Activated CD4-positive, alpha-beta T cell treated with anti-CD3 and anti-CD28 coated beads for 36 hours (primary cell): ENCODE measurements at regions of chr11 and their contacts with region 1.

Region 1: GRCh38 chr11:63938479-63939396 is at the start of gene NAA40:
- DNase-seq: peak; percentile 97
- ATAC-seq: peak; percentile 93
- H3K4me3 Mint-ChIP-seq: peak within 1 kb of the TSS; percentile 83
- H3K27ac Mint-ChIP-seq: peak within 1 kb of the TSS; percentile 87
- H3K4me1 Mint-ChIP-seq: peaks cover 16% of the 10 kb centered on the region
- H3K27me3 Mint-ChIP-seq: no peaks in the 10 kb centered on the region
- total RNA-seq, gene NAA40: 13.7 to 15.9 TPM

Region 2: GRCh38 chr11:63681321-63682049 is 257.3 kb before region 1 on chr11 and contains the start of gene RTN3:
- CTCF ChIA-PET with region 1: no interaction called
- POLR2A ChIA-PET with region 1: no interaction called
- intact Hi-C with region 1: loop called in 1 of 2 experiments (anchors 2 kb)
- DNase-seq: peak; percentile 99
- ATAC-seq: peak; percentile 94
- H3K4me3 Mint-ChIP-seq: peak within 1 kb of the TSS; percentile 90
- H3K27ac Mint-ChIP-seq: peak within 1 kb of the TSS; percentile 89
- H3K4me1 Mint-ChIP-seq: peaks cover 20% of the 10 kb centered on the region
- H3K27me3 Mint-ChIP-seq: no peaks in the 10 kb centered on the region
- total RNA-seq, gene RTN3: 42.2 to 43.0 TPM

Region 3: GRCh38 chr11:63866211-63866610 is 72.5 kb before region 1 on chr11:
- CTCF ChIA-PET with region 1: no interaction called
- POLR2A ChIA-PET with region 1: no interaction called
- intact Hi-C with region 1: loop called in 1 of 2 experiments (anchors 1 kb)
- DNase-seq: peak; percentile 92
- ATAC-seq: peak; percentile 81
- H3K4me3 Mint-ChIP-seq: peak overlapping the region; percentile 28
- H3K27ac Mint-ChIP-seq: peak overlapping the region; percentile 62
- H3K4me1 Mint-ChIP-seq: peaks cover 79% of the 10 kb centered on the region
- H3K27me3 Mint-ChIP-seq: no peaks in the 10 kb centered on the region

Region 4: GRCh38 chr11:63916837-63917691 is 21.7 kb before region 1 on chr11 and contains the start of gene RCOR2:
- CTCF ChIA-PET with region 1: interaction called, 4 read pairs
- POLR2A ChIA-PET with region 1: no interaction called
- intact Hi-C with region 1: loop called in 1 of 2 experiments (anchors 1 kb)
- DNase-seq: peak; percentile 81
- ATAC-seq: peak; percentile 68
- H3K4me3 Mint-ChIP-seq: peak within 1 kb of the TSS; percentile 70
- H3K27ac Mint-ChIP-seq: no peak within 1 kb of the TSS
- H3K4me1 Mint-ChIP-seq: peaks cover 12% of the 10 kb centered on the region
- H3K27me3 Mint-ChIP-seq: peaks cover 3% of the 10 kb centered on the region
- total RNA-seq, gene RCOR2: 0.37 TPM

Region 5: GRCh38 chr11:64165849-64166635 is 227.3 kb after region 1 on chr11 and contains the start of gene MACROD1:
- CTCF ChIA-PET with region 1: no interaction called
- POLR2A ChIA-PET with region 1: no interaction called
- intact Hi-C with region 1: loop called in 1 of 2 experiments (anchors 2 kb)
- DNase-seq: peak; percentile 92
- ATAC-seq: peak; percentile 94
- H3K4me3 Mint-ChIP-seq: peak within 1 kb of the TSS; percentile 92
- H3K27ac Mint-ChIP-seq: peak within 1 kb of the TSS; percentile 83
- H3K4me1 Mint-ChIP-seq: peaks cover 9% of the 10 kb centered on the region
- H3K27me3 Mint-ChIP-seq: no peaks in the 10 kb centered on the region
- total RNA-seq, gene MACROD1: 26.4 to 28.6 TPM

Region 6: DNA sequence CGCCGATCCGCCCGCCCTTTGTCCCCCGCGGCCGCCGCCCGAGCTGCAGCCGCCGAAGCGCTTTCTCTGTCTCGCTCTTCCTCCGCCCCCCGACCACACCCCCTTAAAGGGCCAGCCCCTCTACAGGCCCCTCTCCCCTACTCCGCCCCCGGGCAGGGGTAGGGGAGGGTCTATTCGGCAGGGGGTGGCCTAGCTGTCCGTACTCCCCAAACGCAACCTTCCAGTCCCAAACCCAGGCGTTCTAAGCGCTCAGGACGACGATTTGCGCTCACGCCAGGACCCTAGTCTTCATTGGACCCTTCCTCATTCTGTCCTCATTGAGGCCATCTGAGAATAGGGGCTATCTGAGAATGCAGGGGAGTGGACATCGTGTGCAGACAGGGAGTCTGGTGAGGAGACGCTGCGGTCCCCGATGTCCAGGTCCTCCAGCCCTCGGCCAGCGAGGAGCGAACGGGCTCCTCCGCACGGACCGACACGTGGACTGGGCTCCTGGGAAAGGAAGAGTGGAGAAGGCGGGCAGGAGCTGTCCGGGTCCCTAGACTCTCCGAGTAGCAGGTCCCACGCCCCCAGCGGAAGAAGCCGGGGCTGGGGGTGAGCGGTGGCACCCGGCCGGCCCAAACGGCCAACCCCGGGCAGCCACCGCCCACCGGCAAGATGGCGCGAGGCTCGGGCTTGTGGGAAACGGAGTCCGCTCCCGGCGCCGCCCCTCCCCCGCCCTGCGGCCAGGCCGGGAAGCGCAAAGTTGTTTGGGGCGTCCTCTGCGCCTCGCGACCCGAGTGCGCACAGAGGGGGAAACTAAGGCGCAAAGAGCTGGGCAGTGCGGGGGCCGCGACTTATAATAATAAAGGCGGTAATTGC is 308.4 kb after region 1 on chr11 and contains the start of gene PPP1R14B:
- CTCF ChIA-PET with region 1: no interaction called
- POLR2A ChIA-PET with region 1: no interaction called
- intact Hi-C with region 1: loop called in 1 of 2 experiments (anchors 1 kb)
- DNase-seq: peak; percentile 89
- ATAC-seq: peak; percentile 54
- H3K4me3 Mint-ChIP-seq: peak within 1 kb of the TSS; percentile 94
- H3K27ac Mint-ChIP-seq: peak within 1 kb of the TSS; percentile 92
- H3K4me1 Mint-ChIP-seq: peaks cover 34% of the 10 kb centered on the region
- H3K27me3 Mint-ChIP-seq: no peaks in the 10 kb centered on the region
- total RNA-seq, gene PPP1R14B: 261 to 267 TPM